ENCODE measurements at regions of chr1 and their contacts with region 1.

Region 1: DNA sequence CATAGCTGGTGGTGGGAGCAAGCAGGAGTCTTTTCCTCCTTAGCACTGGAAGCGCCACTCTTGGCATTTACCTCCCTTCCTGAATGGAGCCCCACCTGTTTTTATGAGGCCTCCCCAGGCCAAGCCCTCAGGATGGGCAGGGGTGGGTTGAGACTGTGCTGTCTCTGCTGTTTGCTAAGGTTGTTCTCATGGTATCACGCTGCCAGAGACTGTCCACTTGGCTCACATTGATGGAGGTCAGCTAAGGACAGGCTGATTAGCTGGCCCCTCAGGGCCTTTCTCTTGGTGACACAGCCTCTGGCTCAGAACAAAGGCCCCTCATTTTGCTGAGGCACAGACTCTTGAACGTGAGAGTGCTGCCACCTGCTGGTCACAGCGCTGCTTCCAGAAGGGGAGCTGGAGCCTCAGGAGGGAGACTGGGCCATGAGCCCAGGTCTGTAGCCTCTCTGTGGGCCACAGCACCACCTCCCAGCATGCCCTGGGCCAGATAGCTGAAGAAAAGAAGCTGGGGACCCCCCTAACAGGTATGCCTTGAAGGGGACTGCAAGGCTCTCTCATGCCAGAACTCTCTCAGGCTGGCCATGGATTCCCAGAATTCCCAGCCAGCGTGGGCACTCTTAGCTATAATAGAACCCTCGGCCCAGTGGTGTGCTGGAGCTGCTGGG is 85.6 kb downstream of the CD58 start:
- DNase-seq: peak; percentile 95
- ATAC-seq: peak; percentile 83

Region 2: GRCh38 chr1:116139592-116140134 is 345.5 kb before region 1 on chr1:
- intact Hi-C with region 1: loop called (anchors 5 kb)
- DNase-seq: no peak
- ATAC-seq: no peak

Region 3: DNA sequence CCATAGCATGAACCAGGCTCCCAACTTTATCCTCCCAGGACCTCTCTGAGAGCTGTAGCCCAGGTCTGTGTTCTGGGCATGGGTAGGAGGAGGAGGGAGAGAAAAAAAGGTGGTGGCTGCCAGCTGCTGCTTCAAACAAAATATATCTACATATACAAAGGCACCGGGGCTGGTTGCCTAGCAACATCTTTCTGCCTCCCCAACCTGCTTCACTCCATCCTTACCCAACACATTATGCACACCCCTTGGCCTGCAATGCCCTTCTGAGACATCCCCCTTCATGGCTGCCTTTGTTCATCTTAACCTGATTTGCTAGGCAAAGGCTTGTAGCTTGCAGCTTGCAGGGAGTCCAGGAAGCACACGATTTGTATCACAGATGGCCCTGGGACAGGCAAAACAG is 139.4 kb before region 1 on chr1:
- intact Hi-C with region 1: no loop called
- DNase-seq: peak; percentile 37
- ATAC-seq: peak; percentile 89

Region 4: DNA sequence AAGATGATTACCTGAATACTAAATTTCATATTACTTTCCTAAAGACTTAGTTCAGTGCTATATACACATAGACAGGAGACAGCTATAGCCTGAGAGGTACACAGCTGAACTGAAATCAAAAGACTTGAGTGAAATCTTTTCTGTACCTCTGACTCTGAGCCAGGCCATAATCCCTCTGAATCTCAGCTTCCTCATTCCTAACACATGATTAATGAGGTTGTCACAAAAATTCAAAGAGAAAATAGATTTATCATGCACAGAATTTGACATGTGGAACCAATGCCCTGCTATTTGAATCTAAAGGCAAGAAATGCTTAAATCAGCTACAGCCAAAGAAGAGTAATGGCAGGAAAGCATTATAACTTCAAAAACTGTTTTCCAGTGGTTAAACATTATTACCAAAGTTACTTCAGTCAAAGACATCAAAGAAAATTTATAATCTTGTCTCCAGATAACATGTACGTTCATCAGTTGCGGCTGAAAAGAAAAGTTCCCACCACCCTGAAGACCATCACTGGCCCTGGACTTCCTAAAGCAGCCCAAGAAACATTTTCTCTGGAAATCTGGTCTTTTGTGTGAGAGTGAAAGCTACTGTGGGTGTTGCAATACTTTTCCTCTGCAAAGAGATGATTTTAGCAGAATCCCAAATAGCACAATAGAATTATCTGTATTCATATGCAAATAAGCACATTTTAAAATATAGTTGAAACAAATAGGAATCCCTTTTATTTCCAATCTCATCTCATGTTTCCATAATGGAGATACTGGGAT is 126.0 kb before region 1 on chr1:
- intact Hi-C with region 1: loop called (anchors 5 kb)
- DNase-seq: no peak
- ATAC-seq: no peak